AG04449 (cell line): ENCODE measurements at regions of chr2 and their contacts with region 1.

Region 1: GRCh38 chr2:120174963-120175581 is 48.1 kb downstream of the TMEM185B start:
- DNase-seq: peak; percentile 16
- H3K4me3 ChIP-seq: no peak overlapping the region
- CTCF ChIP-seq: peak; percentile 52

Region 2: GRCh38 chr2:119641562-119642258 is 533.4 kb before region 1 on chr2:
- CTCF ChIA-PET with region 1: interaction called, 53 read pairs
- POLR2A ChIA-PET with region 1: no interaction called
- DNase-seq: no peak
- H3K4me3 ChIP-seq: no peak overlapping the region
- CTCF ChIP-seq: peak; percentile 98

Region 3: GRCh38 chr2:119753041-119753929 is 421.8 kb before region 1 on chr2:
- CTCF ChIA-PET with region 1: interaction called, 51 read pairs
- POLR2A ChIA-PET with region 1: no interaction called
- DNase-seq: no peak
- H3K4me3 ChIP-seq: no peak overlapping the region
- CTCF ChIP-seq: peak; percentile 65

Region 4: DNA sequence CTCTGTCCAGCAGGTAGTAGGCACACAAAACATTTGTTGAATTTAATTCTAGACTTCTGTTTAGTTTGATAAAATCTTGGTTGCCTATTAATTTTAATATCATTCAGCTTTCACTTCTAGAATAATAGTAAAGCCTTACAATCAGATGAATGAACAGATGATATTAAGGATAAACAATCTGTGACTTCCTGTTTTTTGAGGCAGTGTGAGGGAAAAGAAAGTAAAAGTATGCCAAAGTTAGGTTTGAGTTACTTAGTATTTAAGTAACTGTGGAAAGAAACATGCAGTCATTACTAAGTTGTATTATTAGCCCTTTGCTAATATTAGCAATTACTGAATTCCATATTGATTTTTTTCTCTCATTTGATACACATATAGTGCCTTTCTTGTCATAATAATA is 130.7 kb before region 1 on chr2:
- CTCF ChIA-PET with region 1: no interaction called
- POLR2A ChIA-PET with region 1: no interaction called
- DNase-seq: no peak
- H3K4me3 ChIP-seq: no peak overlapping the region
- CTCF ChIP-seq: no peak

Region 5: DNA sequence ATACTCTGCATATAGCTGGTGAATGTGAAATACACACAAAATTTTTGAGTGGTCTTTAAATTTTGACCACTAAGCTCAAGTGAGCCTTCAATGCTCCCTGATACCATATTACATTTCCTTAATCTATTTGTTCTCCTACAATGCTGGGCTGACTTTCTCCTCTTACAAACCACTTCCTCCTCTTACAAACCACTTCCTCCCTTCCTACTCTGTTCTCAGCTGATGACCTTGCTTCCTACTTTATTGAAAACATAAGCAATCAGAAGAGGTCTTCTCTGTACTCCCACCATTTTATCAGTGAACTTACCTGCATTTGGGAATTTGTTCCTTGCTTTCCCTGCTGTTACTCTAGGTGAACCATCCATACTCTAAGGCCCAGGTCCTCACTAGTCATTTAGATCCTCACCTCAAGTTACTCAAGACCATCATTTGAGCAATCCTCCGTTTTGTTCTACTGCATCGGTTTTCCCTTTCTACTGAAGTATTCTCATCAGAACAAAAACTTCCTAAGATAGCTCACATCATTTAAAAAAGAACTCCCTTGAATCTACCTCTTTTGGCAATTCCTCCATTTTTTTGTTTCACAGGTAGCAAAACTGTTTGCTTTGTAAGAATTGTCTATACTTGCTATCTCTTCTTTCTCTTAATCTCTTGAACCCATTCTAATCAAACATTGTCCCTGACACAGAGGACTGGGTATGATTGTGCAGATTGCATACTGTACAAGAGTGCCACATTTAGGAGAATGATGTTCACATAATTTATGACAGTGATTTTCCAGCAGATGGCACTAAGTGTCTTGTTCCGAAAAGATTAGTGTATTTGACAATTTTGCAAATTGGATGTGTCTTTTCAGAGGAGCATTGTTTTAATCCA is 65.6 kb before region 1 on chr2:
- CTCF ChIA-PET with region 1: interaction called, 114 read pairs
- POLR2A ChIA-PET with region 1: no interaction called
- DNase-seq: no peak
- H3K4me3 ChIP-seq: no peak overlapping the region
- CTCF ChIP-seq: peak; percentile 24

Region 6: DNA sequence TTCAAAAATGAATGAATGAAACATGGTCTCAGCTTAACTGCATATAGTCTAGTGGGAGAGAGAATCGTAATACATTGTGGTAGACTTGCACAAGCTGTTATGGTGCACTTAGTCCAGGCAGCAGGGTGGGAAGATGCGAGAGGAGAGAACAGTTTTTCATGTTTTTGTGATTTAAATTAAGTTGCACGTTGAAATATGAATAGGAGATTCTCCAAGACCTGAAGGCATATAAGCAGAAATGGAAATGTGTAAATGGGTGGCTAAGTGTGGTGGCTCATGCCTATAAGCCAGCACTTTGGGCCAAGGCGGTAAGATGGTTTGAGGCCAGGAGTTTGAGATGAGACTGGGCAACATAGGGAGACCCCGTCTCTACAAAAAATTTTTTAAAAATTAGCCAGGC is 12.4 kb before region 1 on chr2:
- CTCF ChIA-PET with region 1: interaction called, 16 read pairs
- POLR2A ChIA-PET with region 1: no interaction called
- DNase-seq: no peak
- H3K4me3 ChIP-seq: no peak overlapping the region
- CTCF ChIP-seq: no peak

Region 7: GRCh38 chr2:120404941-120405758 is 230.1 kb after region 1 on chr2:
- CTCF ChIA-PET with region 1: no interaction called
- POLR2A ChIA-PET with region 1: no interaction called
- DNase-seq: no peak
- H3K4me3 ChIP-seq: no peak overlapping the region
- CTCF ChIP-seq: no peak